Natural killer cell (primary cell): ENCODE measurements at regions of chr6 and their contacts with region 1.

Region 1: GRCh38 chr6:70107852-70108629 is 194.8 kb downstream of the COL9A1 start:
- DNase-seq: peak in 1 of 2 donors; percentile 55
- ATAC-seq: no peak
- H3K4me3 ChIP-seq: no peak overlapping the region
- H3K4me3 Mint-ChIP-seq: no peak overlapping the region
- H3K27ac ChIP-seq: no peak overlapping the region
- H3K27ac Mint-ChIP-seq: no peak overlapping the region
- H3K4me1 ChIP-seq: no peaks in the 10 kb centered on the region
- H3K4me1 Mint-ChIP-seq: no peaks in the 10 kb centered on the region
- H3K27me3 ChIP-seq: no peaks in the 10 kb centered on the region
- H3K27me3 Mint-ChIP-seq: peaks cover 0 to 3% of the 10 kb centered on the region in 2 donors
- CTCF ChIP-seq: no peak

Region 2: DNA sequence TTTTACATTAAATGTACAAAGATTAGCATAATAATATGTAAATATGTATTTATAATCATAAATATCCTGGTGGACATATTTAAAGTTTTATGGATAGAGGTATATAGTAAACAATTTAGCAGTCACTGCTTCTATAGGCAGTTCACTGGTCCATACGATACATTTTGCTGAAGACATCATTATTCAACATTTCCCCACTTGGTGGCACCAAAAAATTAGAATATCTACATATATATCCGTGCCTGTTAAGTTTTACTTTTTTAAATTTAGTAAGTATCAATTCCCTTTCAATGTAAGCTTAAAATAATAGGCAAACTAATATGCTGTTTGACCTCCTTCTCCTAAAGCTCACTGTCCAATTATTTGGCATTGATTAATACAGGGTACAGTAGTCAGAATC is 375.4 kb before region 1 on chr6:
- intact Hi-C with region 1: loop called (anchors 2 kb)
- DNase-seq: peak in 1 of 2 donors; percentile 41
- ATAC-seq: no peak
- H3K4me3 ChIP-seq: no peak overlapping the region
- H3K4me3 Mint-ChIP-seq: no peak overlapping the region
- H3K27ac ChIP-seq: no peak overlapping the region
- H3K27ac Mint-ChIP-seq: no peak overlapping the region
- H3K4me1 ChIP-seq: no peaks in the 10 kb centered on the region
- H3K4me1 Mint-ChIP-seq: peaks cover 5 to 14% of the 10 kb centered on the region in 2 donors
- H3K27me3 ChIP-seq: no peaks in the 10 kb centered on the region
- H3K27me3 Mint-ChIP-seq: no peaks in the 10 kb centered on the region
- CTCF ChIP-seq: peak; percentile 14

Region 3: DNA sequence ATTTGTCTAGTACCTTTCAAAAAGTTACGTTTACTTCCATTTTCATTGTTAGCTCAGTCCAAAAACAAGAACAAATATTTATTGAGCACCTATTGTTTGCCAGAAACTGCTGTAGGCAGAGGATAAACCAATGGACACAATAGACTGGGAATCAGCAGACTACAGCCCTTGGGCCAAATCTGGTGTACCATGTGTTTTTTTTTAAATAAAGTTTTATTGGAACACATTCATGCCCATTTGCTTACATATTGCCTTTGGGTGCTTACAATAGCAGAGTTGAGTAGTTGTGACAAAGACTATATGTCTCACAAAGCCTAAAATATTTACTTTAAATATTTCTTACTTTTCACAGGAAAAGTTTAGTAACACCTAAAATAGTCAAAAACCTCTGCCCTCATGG is 21.2 kb before region 1 on chr6:
- intact Hi-C with region 1: no loop called
- DNase-seq: no peak
- ATAC-seq: no peak
- H3K4me3 ChIP-seq: no peak overlapping the region
- H3K4me3 Mint-ChIP-seq: no peak overlapping the region
- H3K27ac ChIP-seq: no peak overlapping the region
- H3K27ac Mint-ChIP-seq: no peak overlapping the region
- H3K4me1 ChIP-seq: no peaks in the 10 kb centered on the region
- H3K4me1 Mint-ChIP-seq: no peaks in the 10 kb centered on the region
- H3K27me3 ChIP-seq: no peaks in the 10 kb centered on the region
- H3K27me3 Mint-ChIP-seq: no peaks in the 10 kb centered on the region
- CTCF ChIP-seq: no peak